Heart right ventricle (tissue), 16 donors: ENCODE measurements at regions of chr11 and their contacts with region 1.

Region 1: GRCh38 chr11:73350908-73351636 is 25.1 kb upstream of the RELT start:
- DNase-seq: no peak
- ATAC-seq: peak; percentile 8 to 67 (median 40)
- H3K4me3 ChIP-seq: no peak overlapping the region
- H3K27ac ChIP-seq: no peak overlapping the region
- H3K4me1 ChIP-seq: peaks cover 0 to 26% (median 6%) of the 10 kb centered on the region in 9 donors
- H3K27me3 ChIP-seq: no peaks in the 10 kb centered on the region
- CTCF ChIP-seq: peak; percentile 94 to 99 (median 99)

Region 2: GRCh38 chr11:73204711-73205121 is 146.4 kb before region 1 on chr11:
- intact Hi-C with region 1: no loop called
- DNase-seq: peak in 1 of 2 donors; percentile 34
- ATAC-seq: peak; percentile 23 to 81 (median 56)
- H3K4me3 ChIP-seq: no peak overlapping the region
- H3K27ac ChIP-seq: peak overlapping the region in 1 of 10 donors; percentile 73
- H3K4me1 ChIP-seq: peaks cover 0 to 52% (median 0%) of the 10 kb centered on the region in 9 donors
- H3K27me3 ChIP-seq: no peaks in the 10 kb centered on the region
- CTCF ChIP-seq: no peak

Region 3: DNA sequence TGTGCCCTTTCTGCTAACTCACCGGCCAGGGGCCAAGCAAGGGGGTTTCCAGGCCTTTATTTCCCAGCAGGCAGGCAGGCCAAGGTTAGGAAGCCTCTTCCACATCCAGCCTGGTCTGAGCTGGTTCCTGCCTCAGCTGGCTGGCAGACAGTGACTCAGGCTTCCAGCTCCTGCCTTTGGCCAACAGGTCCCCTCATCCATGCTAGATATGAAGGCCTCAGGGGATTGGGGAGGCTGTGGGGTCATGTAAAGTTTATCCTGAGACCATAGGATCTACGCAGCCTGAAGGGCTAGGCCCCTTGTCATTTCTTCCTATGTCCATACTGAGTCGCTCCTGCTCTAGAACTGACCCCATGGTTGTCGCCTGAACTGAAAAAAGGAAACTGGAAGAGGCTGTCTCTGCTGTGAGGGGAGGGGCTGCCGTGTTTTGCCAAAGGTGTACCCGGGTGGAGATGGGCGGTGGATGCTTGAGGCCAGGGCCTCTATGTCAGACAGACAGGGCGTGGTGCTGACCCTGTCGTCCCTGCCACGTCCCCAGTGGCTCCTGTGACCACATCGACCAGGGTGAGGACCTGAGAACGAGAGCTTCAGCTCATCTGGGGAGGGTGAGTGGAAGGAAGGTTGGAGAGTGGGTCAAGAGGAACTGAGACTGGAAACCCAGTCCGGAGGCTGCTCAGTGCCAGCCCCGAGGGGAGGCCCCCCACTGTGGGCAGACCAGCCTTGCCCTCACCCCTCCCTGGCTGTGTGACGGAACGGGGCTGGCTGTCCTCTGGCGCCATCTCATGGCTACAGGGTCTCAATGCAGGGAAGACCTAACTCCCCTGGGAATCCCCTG is 62.0 kb before region 1 on chr11:
- intact Hi-C with region 1: no loop called
- DNase-seq: peak; percentile 70 to 72
- ATAC-seq: peak; percentile 79 to 89 (median 82)
- H3K4me3 ChIP-seq: peak overlapping the region in 8 of 10 donors; percentile 16 to 47 (median 37)
- H3K27ac ChIP-seq: peak overlapping the region; percentile 5 to 91 (median 60)
- H3K4me1 ChIP-seq: peaks cover 12 to 59% (median 31%) of the 10 kb centered on the region in 9 donors
- H3K27me3 ChIP-seq: no peaks in the 10 kb centered on the region
- CTCF ChIP-seq: peak; percentile 92 to 99 (median 96)

Region 4: GRCh38 chr11:73393479-73394380 is 42.7 kb after region 1 on chr11:
- intact Hi-C with region 1: loop called in 9 of 10 experiments (anchors 1 to 5 kb)
- DNase-seq: peak; percentile 70 to 75
- ATAC-seq: peak; percentile 63 to 80 (median 70)
- H3K4me3 ChIP-seq: no peak overlapping the region
- H3K27ac ChIP-seq: peak overlapping the region in 1 of 10 donors; percentile 58
- H3K4me1 ChIP-seq: peaks cover 8 to 53% (median 13%) of the 10 kb centered on the region in 9 donors
- H3K27me3 ChIP-seq: no peaks in the 10 kb centered on the region
- CTCF ChIP-seq: peak; percentile 67 to 89 (median 83)

Region 5: GRCh38 chr11:73645972-73646631 is 295.0 kb after region 1 on chr11 and contains the start of gene PLEKHB1:
- intact Hi-C with region 1: no loop called
- DNase-seq: no peak
- ATAC-seq: peak in 4 of 8 donors; percentile 5 to 26 (median 9)
- H3K4me3 ChIP-seq: peak within 1 kb of the TSS in 7 of 10 donors; percentile 1 to 48 (median 37)
- H3K27ac ChIP-seq: no peak within 1 kb of the TSS
- H3K4me1 ChIP-seq: peaks cover 0 to 26% (median 12%) of the 10 kb centered on the region in 9 donors
- H3K27me3 ChIP-seq: peaks cover 0 to 15% (median 3%) of the 10 kb centered on the region in 7 donors
- CTCF ChIP-seq: no peak
- total RNA-seq, gene PLEKHB1: 6.5 to 44.8 (median 18.8) TPM

Region 6: GRCh38 chr11:73661035-73661628 is 310.1 kb after region 1 on chr11:
- intact Hi-C with region 1: loop called in 4 of 10 experiments (anchors 1 to 5 kb)
- DNase-seq: peak; percentile 90 to 94
- ATAC-seq: peak; percentile 93 to 98 (median 97)
- H3K4me3 ChIP-seq: peak overlapping the region in 9 of 10 donors; percentile 3 to 52 (median 41)
- H3K27ac ChIP-seq: peak overlapping the region in 2 of 10 donors; percentile 22 to 39
- H3K4me1 ChIP-seq: peaks cover 6 to 47% (median 32%) of the 10 kb centered on the region in 9 donors
- H3K27me3 ChIP-seq: no peaks in the 10 kb centered on the region
- CTCF ChIP-seq: peak; percentile 92 to 99 (median 97)